ENCODE measurements at regions of chr15 and their contacts with region 1.

Region 1: GRCh38 chr15:41811432-41812195 is 16.3 kb upstream of the JMJD7 start:
- DNase-seq: peak; percentile 85
- H3K4me3 Mint-ChIP-seq: no peak overlapping the region
- H3K27ac Mint-ChIP-seq: no peak overlapping the region
- H3K4me1 Mint-ChIP-seq: peaks cover 6% of the 10 kb centered on the region
- H3K27me3 Mint-ChIP-seq: no peaks in the 10 kb centered on the region

Region 2: DNA sequence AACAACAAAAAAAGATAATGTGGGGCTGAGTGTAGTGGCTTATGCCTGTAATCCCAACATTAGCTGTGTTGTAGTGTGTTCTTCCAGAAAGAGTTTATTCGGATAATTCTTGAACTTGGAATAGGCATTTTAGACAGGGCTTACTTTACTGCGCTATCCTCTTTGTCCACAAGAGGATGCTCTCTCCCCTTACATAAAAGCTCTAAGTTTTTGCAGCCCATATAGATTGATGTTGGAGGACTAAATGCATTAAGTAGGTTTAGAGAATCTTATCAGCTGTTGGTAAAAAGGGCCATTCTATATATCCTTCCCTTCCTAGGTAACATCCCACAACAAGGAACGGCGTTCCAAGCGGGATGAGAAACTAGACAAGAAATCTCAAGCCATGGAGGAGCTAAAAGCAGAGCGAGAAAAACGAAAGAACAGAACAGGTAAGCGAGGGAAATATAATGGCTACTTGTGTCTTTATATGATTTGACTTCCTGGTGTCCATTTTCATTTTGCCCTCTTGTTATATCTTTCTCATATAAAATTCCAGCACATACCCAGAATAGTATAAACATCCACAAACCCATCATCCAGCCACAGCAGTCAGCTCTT is 345.7 kb before region 1 on chr15:
- CTCF ChIA-PET with region 1: interaction called, 4 read pairs
- intact Hi-C with region 1: loop called (anchors 2 kb)
- DNase-seq: peak; percentile 57
- H3K4me3 Mint-ChIP-seq: no peak overlapping the region
- H3K27ac Mint-ChIP-seq: no peak overlapping the region
- H3K4me1 Mint-ChIP-seq: no peaks in the 10 kb centered on the region
- H3K27me3 Mint-ChIP-seq: no peaks in the 10 kb centered on the region

Region 3: DNA sequence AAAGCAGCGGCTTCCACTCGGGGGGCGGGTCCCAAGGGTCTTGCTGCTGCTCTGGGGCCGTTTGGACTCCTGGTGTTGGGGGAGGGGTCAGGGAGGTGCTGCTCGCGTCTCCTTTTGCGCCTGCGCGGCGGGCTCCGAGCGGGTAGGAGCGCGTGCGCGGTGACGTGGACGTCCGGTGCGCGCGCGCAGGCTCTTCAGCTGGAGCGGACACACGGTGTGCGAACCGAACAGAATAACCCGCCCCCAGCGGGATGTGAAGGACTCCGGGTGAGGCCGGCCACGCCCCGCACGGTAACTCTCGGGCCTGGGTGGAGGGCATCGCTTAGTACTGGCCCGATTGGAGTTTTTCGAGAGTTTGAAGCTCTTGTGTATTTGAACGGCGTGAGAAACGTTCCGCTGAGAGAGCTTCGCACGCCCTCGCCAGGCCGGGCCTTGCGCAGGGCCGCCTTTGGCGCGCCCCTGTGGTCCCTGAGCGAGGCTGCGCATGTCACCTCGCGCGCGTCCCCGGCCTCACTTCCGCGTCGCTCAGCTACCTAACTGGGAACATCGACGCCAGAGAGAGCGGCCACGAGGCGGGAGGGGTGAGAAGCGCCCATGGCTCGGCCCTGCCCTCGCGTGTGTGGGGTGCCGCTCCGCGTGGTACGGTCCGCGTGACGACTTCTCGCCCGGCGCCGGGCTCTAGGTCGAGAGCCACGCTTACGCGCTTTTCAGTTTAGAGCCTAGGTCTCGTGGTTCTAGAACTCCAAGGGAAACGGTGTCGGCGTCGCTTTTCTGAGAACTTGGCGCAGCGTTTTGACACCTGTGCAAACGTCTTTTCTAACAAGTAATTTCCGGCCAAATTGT is 151.2 kb before region 1 on chr15 and contains the start of gene MGA:
- CTCF ChIA-PET with region 1: no interaction called
- intact Hi-C with region 1: loop called (anchors 2 kb)
- DNase-seq: peak; percentile 84
- H3K4me3 Mint-ChIP-seq: peak within 1 kb of the TSS; percentile 95
- H3K27ac Mint-ChIP-seq: peak within 1 kb of the TSS; percentile 81
- H3K4me1 Mint-ChIP-seq: peaks cover 32% of the 10 kb centered on the region
- H3K27me3 Mint-ChIP-seq: peaks cover 2% of the 10 kb centered on the region
- total RNA-seq, gene MGA: 27.4 to 28.3 TPM

Region 4: DNA sequence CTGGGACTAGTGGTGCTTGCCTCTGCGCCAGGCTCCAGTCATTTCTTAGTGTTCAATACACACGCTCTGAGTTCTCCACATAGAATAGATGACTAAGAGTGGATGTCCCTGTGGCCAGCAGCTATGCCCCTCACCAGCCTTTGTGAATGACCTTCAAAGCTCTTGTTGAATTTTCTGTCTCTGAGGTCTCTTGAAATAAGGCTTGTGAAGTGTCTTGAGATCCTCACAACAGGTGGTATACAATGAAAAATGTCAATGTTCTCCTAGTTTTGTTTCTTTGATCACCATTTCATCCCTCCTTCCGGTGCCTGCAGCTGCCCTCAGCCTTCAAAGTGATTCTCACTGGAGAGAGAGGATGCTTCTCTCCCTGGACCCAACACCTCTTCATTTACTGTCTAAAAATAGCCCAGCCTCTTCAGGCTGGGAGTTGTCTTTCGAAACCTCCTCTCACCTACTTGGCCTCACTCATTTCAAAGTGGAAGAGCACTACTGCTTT is 31.9 kb before region 1 on chr15:
- CTCF ChIA-PET with region 1: interaction called, 177 read pairs
- intact Hi-C with region 1: loop called (anchors 1 kb)
- DNase-seq: no peak
- H3K4me3 Mint-ChIP-seq: no peak overlapping the region
- H3K27ac Mint-ChIP-seq: no peak overlapping the region
- H3K4me1 Mint-ChIP-seq: peaks cover 60% of the 10 kb centered on the region
- H3K27me3 Mint-ChIP-seq: no peaks in the 10 kb centered on the region

Region 5: DNA sequence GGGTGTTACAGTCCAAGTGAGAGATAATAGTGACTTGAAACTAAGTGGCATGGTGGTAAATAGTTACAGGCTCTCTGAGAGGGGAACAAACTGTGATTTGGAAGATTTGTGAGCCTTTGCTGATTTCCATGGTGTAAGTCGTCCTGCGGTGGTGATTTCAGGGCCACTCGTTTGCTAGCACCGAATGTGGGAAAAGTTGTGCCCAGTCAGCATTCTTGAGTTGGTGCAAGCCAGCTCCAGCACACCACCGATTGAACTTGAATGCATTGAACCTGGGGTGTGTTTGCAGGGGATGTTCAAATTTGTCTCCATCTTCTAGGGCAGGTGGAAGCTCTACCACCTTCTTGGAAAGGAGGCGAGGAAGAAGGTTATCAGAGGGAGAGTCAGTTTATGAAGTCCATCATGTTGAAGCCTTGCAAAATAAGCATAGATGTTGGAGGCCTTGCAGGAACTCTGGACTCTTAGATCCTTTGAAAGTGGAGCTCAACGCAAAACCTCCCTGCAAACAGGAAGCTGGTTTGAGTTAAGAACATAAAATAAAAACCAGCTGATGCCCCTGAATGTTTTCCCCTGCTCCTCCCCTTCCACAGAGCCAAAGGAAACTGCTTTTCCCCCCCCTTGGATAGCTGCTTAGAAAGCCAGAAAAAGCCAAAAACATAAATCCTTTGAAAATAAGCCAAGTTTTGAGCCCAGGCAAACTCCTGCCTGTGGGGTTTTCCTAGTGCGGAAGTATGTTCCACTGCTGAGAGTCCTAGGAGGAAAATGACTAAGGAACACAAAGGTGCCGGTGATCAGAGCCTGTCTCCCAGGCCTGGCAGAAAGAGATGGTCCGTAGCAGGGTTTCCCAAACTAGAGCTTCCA is 15.4 kb before region 1 on chr15:
- CTCF ChIA-PET with region 1: interaction called, 32 read pairs
- intact Hi-C with region 1: no loop called
- DNase-seq: no peak
- H3K4me3 Mint-ChIP-seq: no peak overlapping the region
- H3K27ac Mint-ChIP-seq: no peak overlapping the region
- H3K4me1 Mint-ChIP-seq: peaks cover 19% of the 10 kb centered on the region
- H3K27me3 Mint-ChIP-seq: no peaks in the 10 kb centered on the region

Measured in activated naive CD4-positive, alpha-beta T cell treated with anti-CD3 and anti-CD28 coated beads for 36 hours (primary cell).